B cell (primary cell): ENCODE measurements at regions of chr1 and their contacts with region 1.

Region 1: DNA sequence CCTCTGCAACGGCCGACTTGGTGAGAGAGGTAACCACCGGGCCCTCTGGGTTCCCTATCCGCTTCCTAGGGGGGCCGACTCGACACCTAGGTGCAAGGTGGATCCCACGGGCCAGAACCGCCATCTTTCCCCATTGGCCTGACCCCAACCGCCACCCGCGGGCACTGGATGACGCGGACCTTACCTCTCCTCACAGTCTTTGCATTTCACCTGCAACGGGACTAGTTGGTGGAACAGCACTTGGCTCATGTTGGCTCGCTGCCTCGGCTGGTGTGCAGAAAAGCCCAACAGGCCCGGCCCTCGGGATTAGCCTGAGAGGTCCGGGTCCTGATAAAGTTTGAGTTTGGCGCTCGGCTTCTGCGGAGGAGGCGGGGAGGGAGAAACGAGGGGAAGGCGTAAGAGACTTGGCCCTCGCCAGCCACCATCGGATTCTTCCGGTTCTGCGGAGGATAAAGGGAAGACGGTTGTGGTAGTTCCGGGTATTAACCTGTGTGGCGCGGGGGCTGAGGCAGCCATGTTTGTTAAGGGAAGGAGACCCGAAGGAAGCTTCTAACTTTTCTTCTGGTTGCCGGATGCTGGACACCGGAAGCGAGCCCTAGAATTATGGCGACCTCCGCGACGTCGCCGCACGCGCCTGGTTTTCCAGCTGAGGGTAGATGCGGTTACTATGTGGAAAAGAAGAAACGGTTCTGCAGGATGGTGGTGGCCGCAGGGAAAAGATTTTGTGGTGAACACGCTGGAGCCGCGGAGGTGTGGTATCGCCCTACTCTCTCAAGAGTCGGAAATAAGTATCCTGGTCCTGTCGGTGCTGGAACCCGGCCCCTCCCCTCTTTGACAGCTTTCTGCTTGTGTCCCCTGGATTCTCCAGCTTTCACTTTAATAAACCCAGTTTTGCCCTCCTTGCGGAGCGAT is at the starts of genes SASS6 and TRMT13:
- DNase-seq: peak; percentile 96
- ATAC-seq: peak; percentile 98
- H3K4me3 ChIP-seq: peak within 1 kb of the TSS; percentile 81 to 95 (median 87)
- H3K4me3 Mint-ChIP-seq: peak within 1 kb of the TSS; percentile 98
- H3K27ac ChIP-seq: peak within 1 kb of the TSS; percentile 59 to 72
- H3K27ac Mint-ChIP-seq: peak within 1 kb of the TSS; percentile 96
- H3K4me1 ChIP-seq: peaks cover 18 to 20% of the 10 kb centered on the region in 2 donors
- H3K4me1 Mint-ChIP-seq: peaks cover 37% of the 10 kb centered on the region
- H3K27me3 ChIP-seq: no peaks in the 10 kb centered on the region
- H3K27me3 Mint-ChIP-seq: no peaks in the 10 kb centered on the region
- CTCF ChIP-seq: no peak
- total RNA-seq, gene SASS6: 7.0 and 8.0 TPM in 2 replicates
- total RNA-seq, gene TRMT13: 40.1 and 41.5 TPM in 2 replicates

Region 2: GRCh38 chr1:99808391-99809115 is 324.3 kb before region 1 on chr1:
- CTCF ChIA-PET with region 1: no interaction called
- POLR2A ChIA-PET with region 1: no interaction called
- intact Hi-C with region 1: loop called (anchors 2 kb)
- DNase-seq: peak; percentile 78
- ATAC-seq: peak; percentile 56
- H3K4me3 ChIP-seq: no peak overlapping the region
- H3K4me3 Mint-ChIP-seq: no peak overlapping the region
- H3K27ac ChIP-seq: no peak overlapping the region
- H3K27ac Mint-ChIP-seq: no peak overlapping the region
- H3K4me1 ChIP-seq: peaks cover 0 to 6% of the 10 kb centered on the region in 2 donors
- H3K4me1 Mint-ChIP-seq: peaks cover 4% of the 10 kb centered on the region
- H3K27me3 ChIP-seq: peaks cover 0 to 4% (median 2%) of the 10 kb centered on the region in 4 experiments
- H3K27me3 Mint-ChIP-seq: peaks cover 31% of the 10 kb centered on the region
- CTCF ChIP-seq: peak; percentile 85

Region 3: DNA sequence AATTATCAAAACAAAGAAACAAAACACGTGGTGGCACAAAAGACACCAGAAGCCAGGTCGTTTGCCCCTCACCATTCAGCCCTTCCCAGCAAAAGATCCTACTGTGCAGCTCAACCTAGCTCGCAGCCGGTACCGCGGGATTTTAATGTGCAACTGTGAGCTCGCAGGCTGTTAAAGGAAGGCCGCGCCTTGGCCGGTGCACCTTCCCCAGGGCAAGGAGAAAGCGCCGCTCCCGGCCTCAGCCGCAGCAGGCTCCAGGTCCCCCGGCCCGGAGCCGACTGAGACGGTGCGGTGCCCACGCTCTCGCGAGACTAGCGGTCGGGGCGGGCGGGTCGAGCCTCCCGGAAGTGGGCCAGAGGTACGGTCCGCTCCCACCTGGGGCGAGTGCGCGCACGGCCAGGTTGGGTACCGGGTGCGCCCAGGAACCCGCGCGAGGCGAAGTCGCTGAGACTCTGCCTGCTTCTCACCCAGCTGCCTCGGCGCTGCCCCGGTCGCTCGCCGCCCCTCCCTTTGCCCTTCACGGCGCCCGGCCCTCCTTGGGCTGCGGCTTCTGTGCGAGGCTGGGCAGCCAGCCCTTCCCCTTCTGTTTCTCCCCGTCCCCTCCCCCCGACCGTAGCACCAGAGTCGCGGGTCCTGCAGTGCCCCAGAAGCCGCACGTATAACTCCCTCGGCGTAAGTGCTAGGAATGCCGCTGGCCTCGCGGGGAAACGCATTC is 282.9 kb before region 1 on chr1 and contains the start of gene AGL:
- CTCF ChIA-PET with region 1: no interaction called
- POLR2A ChIA-PET with region 1: no interaction called
- intact Hi-C with region 1: loop called (anchors 2 kb)
- DNase-seq: peak; percentile 92
- ATAC-seq: peak; percentile 96
- H3K4me3 ChIP-seq: peak within 1 kb of the TSS; percentile 67 to 89 (median 77)
- H3K4me3 Mint-ChIP-seq: peak within 1 kb of the TSS; percentile 98
- H3K27ac ChIP-seq: peak within 1 kb of the TSS; percentile 71 to 84
- H3K27ac Mint-ChIP-seq: peak within 1 kb of the TSS; percentile 82
- H3K4me1 ChIP-seq: peaks cover 15 to 19% of the 10 kb centered on the region in 2 donors
- H3K4me1 Mint-ChIP-seq: peaks cover 25% of the 10 kb centered on the region
- H3K27me3 ChIP-seq: no peaks in the 10 kb centered on the region
- H3K27me3 Mint-ChIP-seq: no peaks in the 10 kb centered on the region
- CTCF ChIP-seq: no peak
- total RNA-seq, gene AGL: 18.7 and 21.7 TPM in 2 replicates

Region 4: GRCh38 chr1:99969729-99970621 is 162.8 kb before region 1 on chr1 and contains the start of gene SLC35A3:
- CTCF ChIA-PET with region 1: no interaction called
- POLR2A ChIA-PET with region 1: no interaction called
- intact Hi-C with region 1: loop called (anchors 1 kb)
- DNase-seq: peak; percentile 82
- ATAC-seq: peak; percentile 75
- H3K4me3 ChIP-seq: peak within 1 kb of the TSS; percentile 66 to 89 (median 82)
- H3K4me3 Mint-ChIP-seq: peak within 1 kb of the TSS; percentile 100
- H3K27ac ChIP-seq: peak within 1 kb of the TSS; percentile 54 to 84
- H3K27ac Mint-ChIP-seq: peak within 1 kb of the TSS; percentile 95
- H3K4me1 ChIP-seq: peaks cover 10% of the 10 kb centered on the region in 2 donors
- H3K4me1 Mint-ChIP-seq: peaks cover 31% of the 10 kb centered on the region
- H3K27me3 ChIP-seq: no peaks in the 10 kb centered on the region
- H3K27me3 Mint-ChIP-seq: no peaks in the 10 kb centered on the region
- CTCF ChIP-seq: no peak
- total RNA-seq, gene SLC35A3: 30.2 and 31.0 TPM in 2 replicates

Region 5: GRCh38 chr1:100249537-100250257 is 116.9 kb after region 1 on chr1 and contains the start of gene DBT:
- CTCF ChIA-PET with region 1: no interaction called
- POLR2A ChIA-PET with region 1: interaction called, 6 read pairs
- intact Hi-C with region 1: loop called (anchors 1 kb)
- DNase-seq: peak; percentile 90
- ATAC-seq: peak; percentile 100
- H3K4me3 ChIP-seq: peak within 1 kb of the TSS; percentile 61 to 99 (median 90)
- H3K4me3 Mint-ChIP-seq: no peak within 1 kb of the TSS
- H3K27ac ChIP-seq: peak within 1 kb of the TSS; percentile 68 to 69
- H3K27ac Mint-ChIP-seq: no peak within 1 kb of the TSS
- H3K4me1 ChIP-seq: peaks cover 12 to 15% of the 10 kb centered on the region in 2 donors
- H3K4me1 Mint-ChIP-seq: peaks cover 13% of the 10 kb centered on the region
- H3K27me3 ChIP-seq: no peaks in the 10 kb centered on the region
- H3K27me3 Mint-ChIP-seq: no peaks in the 10 kb centered on the region
- CTCF ChIP-seq: no peak
- total RNA-seq, gene DBT: 12.9 and 15.1 TPM in 2 replicates

Region 6: DNA sequence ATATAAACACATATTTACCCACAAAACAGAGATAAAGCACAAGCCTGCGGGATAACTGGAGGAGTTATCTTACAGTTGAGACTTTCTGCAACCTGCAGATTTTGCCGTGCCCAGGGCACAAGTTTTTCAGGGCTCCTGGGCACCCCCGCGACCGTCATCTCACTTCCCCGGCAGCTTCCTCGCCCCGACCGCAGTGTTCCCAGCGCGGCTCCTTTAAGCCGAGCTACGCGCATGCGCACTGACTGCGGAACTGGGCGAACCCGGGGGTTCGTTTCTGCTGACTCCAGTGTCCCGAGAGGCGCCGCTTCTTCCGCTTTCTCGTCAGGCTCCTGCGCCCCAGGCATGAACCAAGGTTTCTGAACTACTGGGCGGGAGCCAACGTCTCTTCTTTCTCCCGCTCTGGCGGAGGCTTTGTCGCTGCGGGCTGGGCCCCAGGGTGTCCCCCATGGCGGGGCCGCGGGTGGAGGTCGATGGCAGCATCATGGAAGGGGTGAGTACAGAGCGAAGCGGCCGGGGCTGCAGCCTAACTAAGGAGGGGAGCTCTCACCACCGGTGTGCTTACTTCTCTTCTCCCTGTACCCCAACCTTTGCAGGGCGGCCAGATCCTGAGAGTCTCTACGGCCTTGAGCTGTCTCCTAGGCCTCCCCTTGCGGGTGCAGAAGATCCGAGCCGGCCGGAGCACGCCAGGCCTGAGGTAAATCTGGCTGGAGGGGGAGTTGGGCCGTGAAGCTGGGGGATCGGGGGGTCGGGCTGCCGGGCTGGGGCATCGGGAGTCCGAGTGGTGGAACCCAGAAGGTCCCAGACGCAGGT is 133.3 kb after region 1 on chr1 and contains the start of gene RTCA:
- CTCF ChIA-PET with region 1: no interaction called
- POLR2A ChIA-PET with region 1: interaction called, 15 read pairs
- intact Hi-C with region 1: loop called (anchors 1 kb)
- DNase-seq: peak; percentile 96
- ATAC-seq: peak; percentile 95
- H3K4me3 ChIP-seq: peak within 1 kb of the TSS; percentile 74 to 98 (median 94)
- H3K4me3 Mint-ChIP-seq: peak within 1 kb of the TSS; percentile 100
- H3K27ac ChIP-seq: peak within 1 kb of the TSS; percentile 58 to 81
- H3K27ac Mint-ChIP-seq: peak within 1 kb of the TSS; percentile 98
- H3K4me1 ChIP-seq: peaks cover 15 to 21% of the 10 kb centered on the region in 2 donors
- H3K4me1 Mint-ChIP-seq: peaks cover 38% of the 10 kb centered on the region
- H3K27me3 ChIP-seq: no peaks in the 10 kb centered on the region
- H3K27me3 Mint-ChIP-seq: no peaks in the 10 kb centered on the region
- CTCF ChIP-seq: no peak
- total RNA-seq, gene RTCA: 31.0 and 40.2 TPM in 2 replicates

Region 7: DNA sequence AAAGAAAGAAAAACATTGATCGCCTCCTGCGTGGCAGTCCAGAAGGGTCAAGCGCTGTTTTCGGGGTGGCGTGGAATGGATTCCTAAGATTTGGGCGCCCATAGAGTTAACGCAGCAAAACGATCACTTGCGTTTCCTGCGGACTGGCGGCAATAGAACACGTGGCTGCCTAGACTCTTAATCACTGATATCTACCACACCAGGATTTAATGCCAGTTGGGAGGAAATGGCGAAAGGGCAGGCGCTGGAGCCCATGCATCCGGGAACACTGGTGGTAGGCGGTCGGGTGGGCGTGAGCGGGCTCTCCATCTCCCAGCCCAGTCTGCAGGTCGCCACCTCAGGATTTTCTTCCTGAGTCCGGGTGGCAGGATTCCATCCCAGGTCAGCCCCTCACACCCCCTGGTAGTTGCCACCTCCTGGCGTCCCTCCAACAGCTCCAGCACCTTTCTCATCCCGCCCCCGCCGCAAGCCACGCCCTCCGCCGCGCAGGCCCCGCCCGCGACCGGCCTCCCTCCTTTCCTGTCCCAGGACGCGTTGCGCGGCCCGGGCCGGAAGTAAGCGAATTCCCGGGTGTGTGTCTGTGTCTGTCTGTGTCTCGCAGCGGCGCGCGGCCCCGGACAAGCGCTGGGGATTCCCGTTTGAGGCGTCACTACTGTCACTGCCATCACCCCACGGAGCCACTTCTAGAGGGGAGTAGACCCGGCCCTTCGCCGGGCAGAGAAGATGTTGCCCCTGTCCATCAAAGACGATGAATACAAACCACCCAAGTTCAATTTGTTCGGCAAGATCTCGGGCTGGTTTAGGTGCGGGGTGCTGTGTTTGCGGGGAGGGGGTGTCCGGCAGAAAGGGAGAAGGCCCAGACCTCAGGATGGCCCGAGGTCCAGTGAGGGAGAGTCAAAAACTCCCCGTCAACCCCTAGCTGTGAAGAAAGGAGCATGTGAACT is 763.0 kb after region 1 on chr1 and contains the start of gene SLC30A7:
- CTCF ChIA-PET with region 1: no interaction called
- POLR2A ChIA-PET with region 1: no interaction called
- intact Hi-C with region 1: loop called (anchors 2 kb)
- DNase-seq: peak; percentile 95
- ATAC-seq: peak; percentile 87
- H3K4me3 ChIP-seq: peak within 1 kb of the TSS; percentile 75 to 99 (median 98)
- H3K4me3 Mint-ChIP-seq: peak within 1 kb of the TSS; percentile 94
- H3K27ac ChIP-seq: peak within 1 kb of the TSS; percentile 85 to 97
- H3K27ac Mint-ChIP-seq: peak within 1 kb of the TSS; percentile 94
- H3K4me1 ChIP-seq: peaks cover 10 to 11% of the 10 kb centered on the region in 2 donors
- H3K4me1 Mint-ChIP-seq: peaks cover 32% of the 10 kb centered on the region
- H3K27me3 ChIP-seq: no peaks in the 10 kb centered on the region
- H3K27me3 Mint-ChIP-seq: no peaks in the 10 kb centered on the region
- CTCF ChIP-seq: no peak
- total RNA-seq, gene SLC30A7: 26.7 and 28.6 TPM in 2 replicates